ENCODE measurements at regions of chr1 and their contacts with region 1.

Region 1: GRCh38 chr1:101239095-101240040 is 2.5 kb downstream of the S1PR1 start:
- DNase-seq: no peak
- H3K4me3 ChIP-seq: peak overlapping the region; percentile 46
- H3K27ac ChIP-seq: peak overlapping the region; percentile 24
- H3K4me1 ChIP-seq: no peaks in the 10 kb centered on the region
- H3K27me3 ChIP-seq: peaks cover 23% of the 10 kb centered on the region
- CTCF ChIP-seq: no peak

Region 2: GRCh38 chr1:100928128-100928527 is 311.2 kb before region 1 on chr1:
- intact Hi-C with region 1: loop called (anchors 5 kb)
- DNase-seq: no peak
- H3K4me3 ChIP-seq: no peak overlapping the region
- H3K27ac ChIP-seq: no peak overlapping the region
- H3K4me1 ChIP-seq: no peaks in the 10 kb centered on the region
- H3K27me3 ChIP-seq: no peaks in the 10 kb centered on the region
- CTCF ChIP-seq: no peak

Region 3: DNA sequence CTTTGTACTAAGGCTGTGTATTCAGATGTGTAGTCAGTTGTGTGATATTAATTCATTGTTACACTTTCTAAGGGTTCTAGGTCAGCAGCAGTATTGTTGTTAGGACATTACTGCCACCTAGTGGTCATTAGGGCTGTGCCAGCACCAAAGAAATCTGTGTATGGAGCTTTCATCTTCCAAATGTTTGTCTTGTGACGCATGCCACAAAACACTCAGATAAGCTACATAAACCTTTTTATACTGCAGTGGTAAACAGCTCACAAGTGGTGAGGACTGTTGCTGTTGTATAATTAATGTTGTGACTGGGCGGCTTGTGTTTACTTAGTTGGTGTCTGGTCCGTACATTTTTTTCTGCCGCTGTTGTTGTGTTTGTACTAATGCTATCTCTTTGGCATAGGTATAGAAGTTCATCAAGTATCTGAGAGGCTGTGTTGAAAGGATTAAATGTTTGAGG is 49.1 kb after region 1 on chr1:
- intact Hi-C with region 1: loop called (anchors 2 kb)
- DNase-seq: peak; percentile 70
- H3K4me3 ChIP-seq: no peak overlapping the region
- H3K27ac ChIP-seq: no peak overlapping the region
- H3K4me1 ChIP-seq: no peaks in the 10 kb centered on the region
- H3K27me3 ChIP-seq: no peaks in the 10 kb centered on the region
- CTCF ChIP-seq: peak; percentile 96